Activated CD4-positive, alpha-beta T cell treated with anti-CD3 and anti-CD28 coated beads for 36 hours (primary cell): ENCODE measurements at regions of chr9 and their contacts with region 1.

Region 1: DNA sequence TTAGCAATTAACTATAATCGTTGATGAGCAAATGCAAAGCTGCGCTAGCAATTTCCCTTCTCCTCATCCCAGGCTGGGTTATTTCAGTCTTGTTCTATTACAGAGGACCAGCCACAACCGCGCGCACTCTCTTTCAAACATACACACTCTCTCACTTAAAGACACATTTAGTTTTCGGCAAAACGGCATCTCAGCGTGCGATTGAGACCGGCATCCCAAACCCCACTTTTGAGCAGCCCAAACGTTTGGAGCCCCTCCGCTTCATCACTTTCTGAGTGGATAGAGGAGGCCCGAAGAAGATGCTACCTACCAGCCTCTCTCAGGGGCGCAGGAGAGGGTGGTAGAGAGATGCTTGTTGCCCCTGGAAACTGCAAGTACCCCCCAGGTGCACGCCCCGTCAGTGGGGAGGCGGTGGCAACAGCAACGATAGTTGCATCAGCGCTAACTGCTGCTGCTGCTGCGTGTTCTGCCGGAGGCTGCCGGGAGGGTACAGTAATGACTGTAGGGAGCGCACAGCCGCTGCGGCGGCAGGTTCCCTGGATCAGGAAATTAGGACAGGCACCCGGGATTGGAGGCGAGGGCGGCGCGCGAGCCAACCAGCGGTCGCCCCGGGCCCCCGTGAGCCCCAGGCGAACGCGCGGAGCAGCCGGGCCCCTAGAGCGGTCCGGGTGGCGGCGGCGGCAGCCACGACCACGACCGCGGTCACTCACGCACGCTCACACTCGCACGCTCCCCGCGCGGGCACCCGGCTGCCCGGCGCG is 488 bp upstream of the VLDLR start:
- DNase-seq: peak; percentile 89
- ATAC-seq: peak; percentile 81
- H3K4me3 Mint-ChIP-seq: peak overlapping the region; percentile 90
- H3K27ac Mint-ChIP-seq: peak overlapping the region; percentile 96
- H3K4me1 Mint-ChIP-seq: peaks cover 11% of the 10 kb centered on the region
- H3K27me3 Mint-ChIP-seq: peaks cover 64% of the 10 kb centered on the region

Region 2: GRCh38 chr9:976258-976942 is 1644.7 kb before region 1 on chr9 and contains the start of gene DMRT3:
- CTCF ChIA-PET with region 1: no interaction called
- POLR2A ChIA-PET with region 1: no interaction called
- intact Hi-C with region 1: loop called in 1 of 2 experiments (anchors 10 kb)
- DNase-seq: peak; percentile 32
- ATAC-seq: no peak
- H3K4me3 Mint-ChIP-seq: no peak within 1 kb of the TSS
- H3K27ac Mint-ChIP-seq: no peak within 1 kb of the TSS
- H3K4me1 Mint-ChIP-seq: peaks cover 7% of the 10 kb centered on the region
- H3K27me3 Mint-ChIP-seq: peaks cover 66% of the 10 kb centered on the region
- total RNA-seq, gene DMRT3: not detected

Region 3: GRCh38 chr9:2014696-2015580 is 606.2 kb before region 1 on chr9 and contains the start of gene SMARCA2:
- CTCF ChIA-PET with region 1: no interaction called
- POLR2A ChIA-PET with region 1: no interaction called
- intact Hi-C with region 1: loop called in 1 of 2 experiments (anchors 5 kb)
- DNase-seq: peak; percentile 98
- ATAC-seq: peak; percentile 84
- H3K4me3 Mint-ChIP-seq: peak within 1 kb of the TSS; percentile 92
- H3K27ac Mint-ChIP-seq: peak within 1 kb of the TSS; percentile 99
- H3K4me1 Mint-ChIP-seq: peaks cover 45% of the 10 kb centered on the region
- H3K27me3 Mint-ChIP-seq: no peaks in the 10 kb centered on the region
- total RNA-seq, gene SMARCA2: 91.3 to 94.0 TPM

Region 4: DNA sequence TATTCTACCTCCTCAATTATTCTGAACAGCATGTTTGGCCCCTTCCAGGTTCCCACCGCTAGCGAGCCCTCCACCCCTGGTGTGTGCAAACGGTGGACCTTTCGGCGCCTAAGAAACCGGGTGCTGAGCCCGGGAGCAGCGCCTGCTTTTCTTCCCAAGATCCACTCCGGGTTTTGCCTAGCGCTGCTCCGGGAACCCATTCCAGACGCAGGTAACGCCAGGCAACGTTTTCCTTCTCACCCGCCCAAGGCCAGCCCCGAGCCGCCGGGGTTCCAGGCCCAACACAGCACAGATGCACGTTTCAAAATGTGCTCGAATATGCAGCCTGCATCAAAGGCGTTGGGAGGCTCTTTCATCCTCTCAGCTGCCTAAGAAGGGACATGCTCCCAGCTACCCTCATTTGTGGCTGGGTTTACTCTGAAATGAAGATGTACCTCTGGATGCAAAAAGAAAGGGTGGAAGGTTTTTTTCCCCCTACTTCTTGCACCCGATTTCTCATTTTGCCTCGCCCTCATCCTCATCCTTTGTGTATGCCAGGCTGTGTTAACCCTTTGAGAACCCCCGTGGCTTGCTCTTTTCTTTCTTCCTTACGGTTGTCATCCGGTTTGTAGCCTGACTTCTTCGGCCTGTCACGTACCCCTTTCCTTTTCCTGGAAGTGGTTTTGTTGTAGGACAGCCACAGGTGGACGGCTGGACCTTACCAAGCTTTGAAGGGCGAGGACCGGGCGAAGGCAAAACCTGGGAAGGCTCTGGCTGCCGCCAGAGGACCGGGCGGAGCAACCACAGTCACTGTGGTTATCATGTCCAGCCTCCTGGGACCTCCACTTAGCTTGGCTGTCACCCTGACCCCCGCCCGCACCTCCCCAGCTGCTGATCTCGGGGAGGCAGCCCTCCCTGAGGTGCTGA is 379.0 kb before region 1 on chr9:
- CTCF ChIA-PET with region 1: no interaction called
- POLR2A ChIA-PET with region 1: no interaction called
- intact Hi-C with region 1: loop called in 1 of 2 experiments (anchors 5 kb)
- DNase-seq: peak; percentile 85
- ATAC-seq: peak; percentile 98
- H3K4me3 Mint-ChIP-seq: peak overlapping the region; percentile 74
- H3K27ac Mint-ChIP-seq: peak overlapping the region; percentile 72
- H3K4me1 Mint-ChIP-seq: peaks cover 16% of the 10 kb centered on the region
- H3K27me3 Mint-ChIP-seq: peaks cover 13% of the 10 kb centered on the region

Region 5: DNA sequence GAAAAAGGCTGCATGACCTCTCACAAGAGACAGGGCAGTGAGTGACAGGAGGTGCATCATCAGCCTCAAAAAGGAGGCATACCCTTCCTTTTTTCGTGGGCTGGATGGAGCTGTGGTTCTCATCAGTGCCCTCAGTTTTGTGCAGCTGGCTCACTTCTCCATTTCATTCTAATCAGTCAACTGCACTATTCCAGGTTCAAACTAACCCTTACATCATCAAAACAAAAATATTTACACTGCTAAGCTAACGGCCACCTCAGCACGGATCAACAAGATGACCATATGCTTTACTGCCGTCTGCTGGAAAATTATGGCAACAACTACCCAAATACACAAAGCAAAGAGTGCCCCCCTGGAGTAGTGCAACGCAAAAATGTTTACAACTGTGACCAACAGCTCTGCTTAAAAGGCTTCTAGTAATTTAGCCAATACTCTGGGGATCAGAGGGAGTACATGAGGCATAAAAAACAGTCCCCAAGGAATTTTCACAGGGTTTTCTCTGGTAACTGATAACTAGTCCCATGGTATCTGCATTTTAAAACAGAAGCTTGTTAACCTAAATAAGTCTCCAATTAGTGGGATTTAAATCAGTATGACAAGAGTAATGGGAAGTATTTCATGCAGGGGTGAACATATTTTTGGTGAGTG is 107.0 kb after region 1 on chr9:
- CTCF ChIA-PET with region 1: no interaction called
- POLR2A ChIA-PET with region 1: no interaction called
- intact Hi-C with region 1: loop called in 1 of 2 experiments (anchors 5 kb)
- DNase-seq: no peak
- ATAC-seq: no peak
- H3K4me3 Mint-ChIP-seq: no peak overlapping the region
- H3K27ac Mint-ChIP-seq: no peak overlapping the region
- H3K4me1 Mint-ChIP-seq: no peaks in the 10 kb centered on the region
- H3K27me3 Mint-ChIP-seq: no peaks in the 10 kb centered on the region